ENCODE measurements at regions of chr5 and their contacts with region 1.

Region 1: GRCh38 chr5:83564069-83564749 is 92.7 kb downstream of the VCAN start:
- DNase-seq: peak; percentile 47
- H3K4me3 ChIP-seq: no peak overlapping the region
- H3K27ac ChIP-seq: no peak overlapping the region
- H3K4me1 ChIP-seq: no peaks in the 10 kb centered on the region
- CTCF ChIP-seq: peak; percentile 91

Region 2: GRCh38 chr5:82164176-82164976 is 1399.8 kb before region 1 on chr5:
- CTCF ChIA-PET with region 1: no interaction called
- POLR2A ChIA-PET with region 1: no interaction called
- intact Hi-C with region 1: no loop called
- DNase-seq: no peak
- H3K4me3 ChIP-seq: no peak overlapping the region
- H3K27ac ChIP-seq: no peak overlapping the region
- H3K4me1 ChIP-seq: no peaks in the 10 kb centered on the region
- CTCF ChIP-seq: no peak

Region 3: GRCh38 chr5:82641331-82642003 is 922.7 kb before region 1 on chr5:
- CTCF ChIA-PET with region 1: no interaction called
- POLR2A ChIA-PET with region 1: no interaction called
- intact Hi-C with region 1: loop called (anchors 10 kb)
- DNase-seq: peak; percentile 28
- H3K4me3 ChIP-seq: no peak overlapping the region
- H3K27ac ChIP-seq: no peak overlapping the region
- H3K4me1 ChIP-seq: no peaks in the 10 kb centered on the region
- CTCF ChIP-seq: peak; percentile 71

Region 4: GRCh38 chr5:83281658-83282057 is 282.6 kb before region 1 on chr5:
- CTCF ChIA-PET with region 1: no interaction called
- POLR2A ChIA-PET with region 1: no interaction called
- intact Hi-C with region 1: no loop called
- DNase-seq: no peak
- H3K4me3 ChIP-seq: no peak overlapping the region
- H3K27ac ChIP-seq: no peak overlapping the region
- H3K4me1 ChIP-seq: no peaks in the 10 kb centered on the region
- CTCF ChIP-seq: no peak

Region 5: GRCh38 chr5:83430130-83431010 is 133.8 kb before region 1 on chr5:
- CTCF ChIA-PET with region 1: interaction called, 3 read pairs
- POLR2A ChIA-PET with region 1: no interaction called
- intact Hi-C with region 1: loop called (anchors 10 kb)
- DNase-seq: peak; percentile 52
- H3K4me3 ChIP-seq: no peak overlapping the region
- H3K27ac ChIP-seq: no peak overlapping the region
- H3K4me1 ChIP-seq: no peaks in the 10 kb centered on the region
- CTCF ChIP-seq: peak; percentile 93

Region 6: DNA sequence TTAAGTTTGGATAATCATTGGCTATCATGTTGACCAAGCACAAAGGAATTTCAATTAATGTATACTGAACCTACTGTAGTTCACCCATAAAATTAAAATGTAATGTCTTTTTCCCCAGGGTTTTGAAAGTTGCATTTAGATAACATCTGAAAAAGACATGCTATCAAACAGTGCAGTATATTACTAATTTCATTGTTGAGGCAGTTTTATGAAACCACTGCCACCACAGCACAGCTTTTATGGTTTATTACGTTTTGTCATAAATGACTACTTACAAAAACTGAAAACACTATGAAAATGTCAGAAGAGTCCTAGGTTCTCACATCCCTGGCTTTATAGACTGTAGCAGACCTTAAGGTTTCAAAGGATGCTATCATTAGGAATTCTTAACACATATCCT is 188.5 kb after region 1 on chr5:
- CTCF ChIA-PET with region 1: no interaction called
- POLR2A ChIA-PET with region 1: no interaction called
- intact Hi-C with region 1: no loop called
- DNase-seq: no peak
- H3K4me3 ChIP-seq: no peak overlapping the region
- H3K27ac ChIP-seq: no peak overlapping the region
- H3K4me1 ChIP-seq: no peaks in the 10 kb centered on the region
- CTCF ChIP-seq: no peak

Region 7: DNA sequence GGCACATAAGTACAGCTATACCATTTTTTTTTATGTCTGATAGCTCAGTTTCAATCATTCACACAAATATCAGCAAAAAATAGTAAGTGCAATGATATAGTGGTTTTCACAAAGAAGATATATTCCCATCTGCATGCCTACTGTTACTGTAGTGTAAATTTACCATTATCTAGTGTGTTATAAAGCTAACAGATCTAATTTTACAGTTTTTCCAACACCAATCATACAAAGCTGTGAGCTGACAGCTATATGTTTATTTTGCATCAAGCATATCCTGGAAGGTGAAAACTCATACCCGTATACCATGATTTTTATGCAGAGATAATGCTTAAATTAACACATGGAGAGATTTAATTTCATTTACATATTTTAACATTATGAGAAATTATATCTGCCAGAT is 246.3 kb after region 1 on chr5:
- CTCF ChIA-PET with region 1: no interaction called
- POLR2A ChIA-PET with region 1: no interaction called
- intact Hi-C with region 1: no loop called
- DNase-seq: no peak
- H3K4me3 ChIP-seq: no peak overlapping the region
- H3K27ac ChIP-seq: no peak overlapping the region
- H3K4me1 ChIP-seq: no peaks in the 10 kb centered on the region
- CTCF ChIP-seq: no peak